ENCODE measurements at regions of chr12 and their contacts with region 1.

Region 1: DNA sequence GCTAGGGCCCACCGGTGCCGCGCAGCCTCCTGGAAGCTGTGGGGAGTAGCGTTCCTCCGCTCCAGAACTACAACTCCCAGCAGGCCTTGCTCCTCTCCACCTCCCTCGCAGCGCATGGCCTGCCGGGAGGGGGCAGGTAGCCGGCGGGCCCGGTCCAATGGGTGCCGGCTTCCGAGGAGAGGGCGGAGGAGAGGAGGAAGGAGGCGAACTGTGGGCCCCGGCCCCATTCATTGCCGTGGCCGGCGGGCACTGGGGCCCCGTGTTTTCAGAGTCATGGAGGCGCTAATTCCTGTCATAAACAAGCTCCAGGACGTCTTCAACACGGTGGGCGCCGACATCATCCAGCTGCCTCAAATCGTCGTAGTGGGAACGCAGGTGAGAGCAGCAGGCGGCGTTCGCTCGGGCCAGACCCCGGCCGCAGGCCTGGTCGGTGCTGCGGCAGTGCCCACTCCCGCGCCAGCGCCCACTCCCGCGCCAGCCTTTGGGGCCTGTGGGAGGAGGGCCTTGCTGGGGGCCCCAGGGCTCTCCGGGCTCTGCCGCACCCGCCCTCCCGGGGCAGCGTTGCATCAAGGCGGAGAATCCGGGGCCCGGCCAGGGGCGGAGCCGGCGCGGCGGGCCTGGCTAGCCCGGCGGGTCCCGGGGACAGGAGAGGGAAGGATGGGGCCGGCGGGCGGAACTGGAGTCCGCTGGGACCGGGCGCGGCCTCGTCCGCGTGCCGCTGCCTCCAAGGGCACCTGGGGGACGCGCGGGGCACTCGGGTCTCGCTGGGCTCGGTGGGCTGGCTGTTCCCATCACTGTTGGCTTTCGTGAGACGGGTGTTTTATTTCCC is at the start of gene DNM1L:
- DNase-seq: peak; percentile 93
- ATAC-seq: peak; percentile 96
- H3K4me3 ChIP-seq: peak within 1 kb of the TSS; percentile 62 to 92 (median 86)
- H3K4me3 Mint-ChIP-seq: peak within 1 kb of the TSS; percentile 93
- H3K27ac ChIP-seq: peak within 1 kb of the TSS; percentile 63 to 79
- H3K27ac Mint-ChIP-seq: peak within 1 kb of the TSS; percentile 90
- H3K4me1 ChIP-seq: peaks cover 14 to 23% of the 10 kb centered on the region in 2 donors
- H3K4me1 Mint-ChIP-seq: peaks cover 34% of the 10 kb centered on the region
- H3K27me3 ChIP-seq: no peaks in the 10 kb centered on the region
- H3K27me3 Mint-ChIP-seq: no peaks in the 10 kb centered on the region
- CTCF ChIP-seq: no peak
- total RNA-seq, gene DNM1L: 74.2 and 76.0 TPM in 2 replicates

Region 2: DNA sequence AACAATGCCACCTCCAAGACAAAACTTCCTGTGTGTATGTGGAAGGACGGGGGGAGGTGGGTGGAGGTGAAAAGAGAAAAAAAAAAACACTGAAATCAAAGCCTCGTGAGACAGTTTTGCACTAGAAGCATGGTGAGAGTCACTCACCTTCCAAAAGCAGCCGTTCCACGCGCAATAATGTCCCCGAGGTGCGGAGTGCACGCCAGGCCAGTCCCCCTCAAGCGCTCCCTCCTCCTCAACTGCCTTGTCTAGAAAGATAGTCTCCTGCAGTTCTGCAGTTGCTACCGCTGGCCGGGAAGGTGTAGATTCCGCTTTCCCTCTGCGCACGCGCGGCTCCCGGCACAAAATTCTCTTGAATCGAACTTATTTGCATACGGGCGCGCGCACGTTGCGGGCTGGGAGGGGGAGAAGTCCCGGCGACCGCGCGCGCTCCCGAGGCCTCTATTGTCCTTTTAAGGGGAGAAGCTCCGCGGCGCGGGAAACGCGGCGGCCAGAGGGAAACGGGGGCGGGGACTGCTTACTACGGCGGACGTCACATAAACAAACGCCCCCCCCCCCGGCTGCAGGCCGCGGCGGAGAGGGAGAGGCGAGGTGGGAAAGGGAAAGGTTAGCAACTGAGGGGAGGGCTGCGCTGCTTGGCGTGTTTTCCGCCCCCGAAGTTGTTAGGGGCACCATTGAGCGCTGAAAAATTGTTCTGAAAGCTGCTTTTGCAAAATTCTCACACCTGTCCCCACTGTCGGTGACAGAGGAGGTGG is 1353.3 kb before region 1 on chr12 and contains the start of gene SINHCAF:
- CTCF ChIA-PET with region 1: no interaction called
- POLR2A ChIA-PET with region 1: no interaction called
- intact Hi-C with region 1: loop called (anchors 1 kb)
- DNase-seq: peak; percentile 99
- ATAC-seq: peak; percentile 64
- H3K4me3 ChIP-seq: peak within 1 kb of the TSS; percentile 70 to 96 (median 93)
- H3K4me3 Mint-ChIP-seq: peak within 1 kb of the TSS; percentile 98
- H3K27ac ChIP-seq: peak within 1 kb of the TSS; percentile 97
- H3K27ac Mint-ChIP-seq: peak within 1 kb of the TSS; percentile 99
- H3K4me1 ChIP-seq: peaks cover 27 to 36% of the 10 kb centered on the region in 2 donors
- H3K4me1 Mint-ChIP-seq: peaks cover 39% of the 10 kb centered on the region
- H3K27me3 ChIP-seq: no peaks in the 10 kb centered on the region
- H3K27me3 Mint-ChIP-seq: no peaks in the 10 kb centered on the region
- CTCF ChIP-seq: no peak
- total RNA-seq, gene SINHCAF: 127 and 129 TPM in 2 replicates

Region 3: DNA sequence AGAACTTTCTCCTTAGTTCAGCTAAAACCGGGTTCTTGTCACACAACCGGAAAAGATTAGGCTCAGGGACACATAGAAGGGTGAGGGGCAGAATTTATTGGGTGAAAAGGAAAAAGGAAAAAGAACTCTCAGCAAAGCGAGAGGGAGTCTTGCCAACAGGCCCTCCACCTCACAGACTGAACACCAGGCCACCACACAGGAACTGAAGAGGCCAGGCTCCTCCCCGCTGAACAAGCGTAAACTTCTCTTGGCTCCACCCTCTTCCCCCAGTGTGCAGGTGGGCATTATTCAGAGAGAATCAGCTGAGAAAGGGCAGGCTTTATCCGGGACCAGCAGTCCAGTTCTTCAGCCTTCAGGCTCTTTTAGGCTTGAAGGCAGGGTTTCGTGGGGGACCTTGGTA is 405.6 kb before region 1 on chr12:
- CTCF ChIA-PET with region 1: no interaction called
- POLR2A ChIA-PET with region 1: no interaction called
- intact Hi-C with region 1: loop called (anchors 5 kb)
- DNase-seq: peak; percentile 81
- ATAC-seq: peak; percentile 96
- H3K4me3 ChIP-seq: peak overlapping the region in 2 of 5 experiments; percentile 23 to 28
- H3K4me3 Mint-ChIP-seq: peak overlapping the region; percentile 79
- H3K27ac ChIP-seq: peak overlapping the region; percentile 88 to 95
- H3K27ac Mint-ChIP-seq: peak overlapping the region; percentile 98
- H3K4me1 ChIP-seq: peaks cover 38 to 40% of the 10 kb centered on the region in 2 donors
- H3K4me1 Mint-ChIP-seq: peaks cover 36% of the 10 kb centered on the region
- H3K27me3 ChIP-seq: no peaks in the 10 kb centered on the region
- H3K27me3 Mint-ChIP-seq: no peaks in the 10 kb centered on the region
- CTCF ChIP-seq: no peak

Region 4: GRCh38 chr12:32365473-32366064 is 313.7 kb before region 1 on chr12:
- CTCF ChIA-PET with region 1: no interaction called
- POLR2A ChIA-PET with region 1: no interaction called
- intact Hi-C with region 1: loop called (anchors 10 kb)
- DNase-seq: peak; percentile 60
- ATAC-seq: peak; percentile 43
- H3K4me3 ChIP-seq: no peak overlapping the region
- H3K4me3 Mint-ChIP-seq: no peak overlapping the region
- H3K27ac ChIP-seq: no peak overlapping the region
- H3K27ac Mint-ChIP-seq: no peak overlapping the region
- H3K4me1 ChIP-seq: no peaks in the 10 kb centered on the region
- H3K4me1 Mint-ChIP-seq: no peaks in the 10 kb centered on the region
- H3K27me3 ChIP-seq: no peaks in the 10 kb centered on the region
- H3K27me3 Mint-ChIP-seq: no peaks in the 10 kb centered on the region
- CTCF ChIP-seq: peak; percentile 88

Region 5: GRCh38 chr12:32522331-32523221 is 156.7 kb before region 1 on chr12:
- CTCF ChIA-PET with region 1: no interaction called
- POLR2A ChIA-PET with region 1: no interaction called
- intact Hi-C with region 1: no loop called
- DNase-seq: peak; percentile 39
- ATAC-seq: peak; percentile 49
- H3K4me3 ChIP-seq: no peak overlapping the region
- H3K4me3 Mint-ChIP-seq: peak overlapping the region; percentile 40
- H3K27ac ChIP-seq: peak overlapping the region; percentile 7 to 74
- H3K27ac Mint-ChIP-seq: peak overlapping the region; percentile 60
- H3K4me1 ChIP-seq: peaks cover 23% of the 10 kb centered on the region in 2 donors
- H3K4me1 Mint-ChIP-seq: peaks cover 25% of the 10 kb centered on the region
- H3K27me3 ChIP-seq: no peaks in the 10 kb centered on the region
- H3K27me3 Mint-ChIP-seq: no peaks in the 10 kb centered on the region
- CTCF ChIP-seq: no peak